ENCODE measurements at regions of chr4 and their contacts with region 1.

Region 1: DNA sequence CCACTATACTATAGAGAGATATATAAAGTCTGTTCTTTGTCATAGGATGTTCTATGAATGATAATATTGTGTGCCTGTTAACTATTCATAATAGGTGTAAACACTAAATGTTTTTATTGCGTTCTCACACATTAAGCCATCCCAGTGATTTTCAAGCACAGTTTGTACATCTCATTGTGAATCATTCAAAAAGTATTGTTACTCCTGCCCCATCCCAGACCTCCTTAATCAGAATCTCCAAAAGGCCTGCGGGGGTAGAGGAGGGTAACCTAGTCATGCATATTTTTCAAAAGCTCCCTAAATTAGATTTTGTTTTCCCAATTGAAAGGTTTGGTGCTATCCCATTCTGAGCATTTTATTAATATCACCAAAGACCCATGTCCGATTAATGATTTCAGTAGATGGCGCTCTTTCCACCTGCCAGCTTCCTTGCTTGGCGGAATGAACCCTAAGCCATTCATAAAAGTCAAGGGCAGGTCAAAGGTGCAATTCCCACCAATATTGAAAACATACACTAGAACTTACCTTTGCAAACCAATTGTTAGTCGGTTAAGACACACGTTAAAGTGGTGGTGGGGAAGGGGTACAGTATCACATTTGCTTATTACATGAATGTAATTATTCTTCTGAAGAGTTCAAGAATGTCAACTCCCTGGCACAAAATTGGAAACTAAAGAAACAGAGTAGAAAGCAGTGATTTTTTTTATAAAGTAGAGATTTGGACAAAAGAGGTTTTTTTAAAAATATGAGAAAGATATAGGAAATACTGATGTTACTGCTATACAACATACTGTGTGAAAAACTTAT is 5.8 kb upstream of the TET2 start:
- DNase-seq: peak; percentile 59
- H3K4me3 Mint-ChIP-seq: no peak overlapping the region
- H3K27ac Mint-ChIP-seq: no peak overlapping the region
- H3K4me1 Mint-ChIP-seq: peaks cover 28% of the 10 kb centered on the region
- H3K27me3 Mint-ChIP-seq: no peaks in the 10 kb centered on the region

Region 2: DNA sequence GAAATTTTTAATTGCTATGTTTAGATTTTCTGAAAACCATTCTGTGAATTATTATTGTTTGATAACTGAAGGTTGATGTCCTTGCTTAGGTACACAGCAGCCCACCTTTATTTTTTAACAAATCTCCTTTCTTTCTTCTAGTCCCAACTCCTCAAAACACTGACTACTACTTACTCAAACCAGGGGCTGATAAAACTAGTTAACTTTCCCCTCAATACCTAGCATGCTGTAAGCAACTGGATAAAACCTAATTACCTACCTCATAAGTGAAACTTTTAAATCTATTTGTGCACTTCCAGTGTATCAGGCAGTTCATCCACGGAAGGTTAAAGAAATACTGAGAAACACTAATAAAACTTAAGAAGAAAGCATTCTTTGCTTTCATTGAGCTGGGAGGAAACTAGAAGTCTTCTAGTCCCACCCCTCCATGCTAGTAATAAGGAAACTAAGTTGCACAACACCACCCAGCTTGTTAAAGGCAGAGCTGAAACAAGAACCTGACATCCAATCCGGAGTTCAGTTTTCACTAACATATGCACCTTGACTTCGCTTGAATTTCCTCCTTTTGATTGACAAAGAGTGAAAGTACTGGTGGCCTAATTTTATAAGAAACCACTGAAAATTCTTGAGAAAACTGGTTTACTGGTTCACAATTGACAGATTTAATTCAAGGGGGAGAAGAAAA is 174.4 kb before region 1 on chr4:
- CTCF ChIA-PET with region 1: no interaction called
- intact Hi-C with region 1: loop called (anchors 1 kb)
- DNase-seq: peak; percentile 73
- H3K4me3 Mint-ChIP-seq: no peak overlapping the region
- H3K27ac Mint-ChIP-seq: peak overlapping the region; percentile 82
- H3K4me1 Mint-ChIP-seq: peaks cover 12% of the 10 kb centered on the region
- H3K27me3 Mint-ChIP-seq: peaks cover 12% of the 10 kb centered on the region

Region 3: GRCh38 chr4:105215609-105216313 is 74.9 kb after region 1 on chr4:
- CTCF ChIA-PET with region 1: interaction called, 3 read pairs
- intact Hi-C with region 1: loop called (anchors 1 kb)
- DNase-seq: no peak
- H3K4me3 Mint-ChIP-seq: peak overlapping the region; percentile 2
- H3K27ac Mint-ChIP-seq: peak overlapping the region; percentile 85
- H3K4me1 Mint-ChIP-seq: peaks cover 46% of the 10 kb centered on the region
- H3K27me3 Mint-ChIP-seq: no peaks in the 10 kb centered on the region

Region 4: DNA sequence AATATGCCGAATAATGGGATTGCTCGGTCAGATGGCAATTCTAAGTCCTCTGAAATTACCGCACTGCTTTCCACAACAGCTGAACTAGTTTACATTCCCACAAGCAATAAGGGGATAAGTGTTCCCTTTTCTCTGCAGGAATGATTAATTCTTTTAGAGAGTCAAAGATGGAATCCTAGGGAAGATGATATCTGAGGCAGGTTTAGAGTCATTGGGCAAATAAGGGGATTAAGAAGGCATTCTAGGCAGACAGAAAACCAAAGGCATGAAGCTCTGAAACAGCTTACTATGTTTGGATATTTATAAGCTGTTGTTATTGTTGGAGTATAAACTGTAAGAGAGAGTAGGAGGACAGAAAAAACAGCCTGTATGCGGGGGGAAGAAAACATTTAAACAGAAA is 91.5 kb after region 1 on chr4:
- CTCF ChIA-PET with region 1: no interaction called
- intact Hi-C with region 1: no loop called
- DNase-seq: no peak
- H3K4me3 Mint-ChIP-seq: no peak overlapping the region
- H3K27ac Mint-ChIP-seq: no peak overlapping the region
- H3K4me1 Mint-ChIP-seq: peaks cover 13% of the 10 kb centered on the region
- H3K27me3 Mint-ChIP-seq: no peaks in the 10 kb centered on the region

Region 5: GRCh38 chr4:105453550-105454205 is 312.8 kb after region 1 on chr4:
- CTCF ChIA-PET with region 1: interaction called, 7 read pairs
- intact Hi-C with region 1: loop called (anchors 1 kb)
- DNase-seq: peak; percentile 63
- H3K4me3 Mint-ChIP-seq: no peak overlapping the region
- H3K27ac Mint-ChIP-seq: peak overlapping the region; percentile 47
- H3K4me1 Mint-ChIP-seq: peaks cover 41% of the 10 kb centered on the region
- H3K27me3 Mint-ChIP-seq: no peaks in the 10 kb centered on the region

Region 6: GRCh38 chr4:105496899-105497298 is 356.0 kb after region 1 on chr4:
- CTCF ChIA-PET with region 1: no interaction called
- intact Hi-C with region 1: no loop called
- DNase-seq: no peak
- H3K4me3 Mint-ChIP-seq: no peak overlapping the region
- H3K27ac Mint-ChIP-seq: no peak overlapping the region
- H3K4me1 Mint-ChIP-seq: no peaks in the 10 kb centered on the region
- H3K27me3 Mint-ChIP-seq: peaks cover 24% of the 10 kb centered on the region

Region 7: DNA sequence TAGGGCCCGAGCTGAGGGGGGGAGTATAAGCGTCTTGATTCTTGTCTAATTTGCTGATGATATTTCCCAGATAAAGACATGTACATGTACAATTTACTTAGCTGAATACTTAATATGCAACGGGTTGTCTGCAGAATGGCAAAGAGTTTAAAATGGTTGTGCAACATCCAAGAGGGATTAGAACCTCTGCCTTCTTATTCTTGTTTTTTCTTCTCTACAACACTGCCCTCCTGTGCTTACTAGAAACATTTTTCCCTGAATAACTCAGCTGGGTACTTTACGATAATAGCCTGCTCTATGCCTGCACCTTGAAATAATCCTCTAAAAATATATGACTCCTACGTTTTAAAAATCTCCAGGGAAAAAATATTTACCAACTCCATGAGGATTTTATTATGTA is 525.8 kb after region 1 on chr4:
- CTCF ChIA-PET with region 1: no interaction called
- intact Hi-C with region 1: loop called (anchors 1 kb)
- DNase-seq: no peak
- H3K4me3 Mint-ChIP-seq: no peak overlapping the region
- H3K27ac Mint-ChIP-seq: no peak overlapping the region
- H3K4me1 Mint-ChIP-seq: no peaks in the 10 kb centered on the region
- H3K27me3 Mint-ChIP-seq: peaks cover 4% of the 10 kb centered on the region

Measured in activated naive CD4-positive, alpha-beta T cell treated with anti-CD3 and anti-CD28 coated beads for 36 hours (primary cell).